Endothelial cell of umbilical vein (primary cell): ENCODE measurements at regions of chr20 and their contacts with region 1.

Region 1: DNA sequence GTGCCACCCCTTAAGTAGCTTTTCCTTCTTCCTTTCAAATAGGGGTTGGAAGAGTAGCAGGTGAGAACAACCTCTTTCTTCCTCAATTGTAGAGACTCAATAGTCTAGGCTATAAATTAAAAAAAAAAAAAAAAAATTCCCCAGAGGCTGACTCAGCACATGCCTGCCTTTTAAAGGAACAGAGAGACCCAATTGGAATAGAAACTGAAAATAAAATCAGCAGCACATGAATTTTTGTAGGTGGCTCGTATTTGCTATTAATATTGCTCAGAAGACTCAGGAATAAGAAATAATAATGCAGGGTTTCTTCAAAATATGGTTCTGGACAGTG is 19.3 kb downstream of the TOP1 start:
- DNase-seq: no peak
- H3K4me3 ChIP-seq: no peak overlapping the region
- H3K27ac ChIP-seq: no peak overlapping the region
- H3K4me1 ChIP-seq: peaks cover 31% of the 10 kb centered on the region
- H3K27me3 ChIP-seq: no peaks in the 10 kb centered on the region
- CTCF ChIP-seq: no peak
- POLR2A ChIP-seq: no peak

Region 2: GRCh38 chr20:41095110-41095969 is 47.4 kb after region 1 on chr20:
- CTCF ChIA-PET with region 1: interaction called, 10 read pairs
- POLR2A ChIA-PET with region 1: no interaction called
- dilution Hi-C with region 1: no loop called
- intact Hi-C with region 1: no loop called
- DNase-seq: peak; percentile 71
- H3K4me3 ChIP-seq: no peak overlapping the region
- H3K27ac ChIP-seq: no peak overlapping the region
- H3K4me1 ChIP-seq: peaks cover 14% of the 10 kb centered on the region
- H3K27me3 ChIP-seq: no peaks in the 10 kb centered on the region
- CTCF ChIP-seq: peak; percentile 67 to 75
- POLR2A ChIP-seq: no peak